ENCODE measurements at regions of chr7 and their contacts with region 1.

Region 1: DNA sequence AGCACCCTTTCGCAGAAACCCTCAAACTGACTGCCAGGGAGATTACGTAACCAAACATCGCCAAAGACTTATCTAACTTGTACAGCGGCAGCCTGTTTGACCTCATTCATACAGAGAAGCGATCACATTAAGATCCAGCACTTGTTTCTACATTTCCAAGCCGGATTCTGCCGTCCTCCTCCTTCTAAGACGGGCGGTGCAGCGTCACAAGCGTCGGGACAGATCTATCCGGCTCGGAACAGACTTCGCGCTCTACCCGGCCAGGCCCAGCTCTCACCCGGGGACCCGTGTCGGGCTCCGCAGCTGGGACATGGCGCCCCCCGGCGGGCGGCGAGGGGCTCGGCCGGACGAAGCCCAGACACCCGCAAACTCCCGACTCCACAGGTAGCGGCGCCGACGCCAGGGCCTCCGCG is 373 bp downstream of the H2AZ2 start:
- DNase-seq: peak; percentile 83 to 94
- ATAC-seq: peak; percentile 80 to 89
- H3K4me3 ChIP-seq: peak overlapping the region; percentile 61
- H3K27ac ChIP-seq: peak overlapping the region; percentile 87 to 97
- H3K4me1 ChIP-seq: peaks cover 15% of the 10 kb centered on the region
- CTCF ChIP-seq: peak; percentile 91
- EP300 ChIP-seq: no peak
- POLR2A ChIP-seq: no peak
- RAD21 ChIP-seq: peak; percentile 64 to 89; a peak in 4 of 5 replicates

Region 2: GRCh38 chr7:44581879-44582603 is 265.5 kb before region 1 on chr7 and contains the start of gene TMED4:
- CTCF ChIA-PET with region 1: interaction called, 29 read pairs
- POLR2A ChIA-PET with region 1: interaction called, 14 read pairs
- DNase-seq: peak; percentile 98 to 99
- ATAC-seq: peak; percentile 94
- H3K4me3 ChIP-seq: peak within 1 kb of the TSS; percentile 94
- H3K27ac ChIP-seq: peak within 1 kb of the TSS; percentile 94 to 95
- H3K4me1 ChIP-seq: peaks cover 16% of the 10 kb centered on the region
- CTCF ChIP-seq: no peak
- EP300 ChIP-seq: no peak
- POLR2A ChIP-seq: peak; percentile 93
- RAD21 ChIP-seq: no peak
- polyA plus RNA-seq, gene TMED4: 68.3 and 79.2 TPM in 2 replicates

Region 3: GRCh38 chr7:44606450-44607254 is 240.9 kb before region 1 on chr7 and contains the start of gene OGDH:
- CTCF ChIA-PET with region 1: interaction called, 12 read pairs
- POLR2A ChIA-PET with region 1: interaction called, 16 read pairs
- DNase-seq: peak; percentile 98
- ATAC-seq: peak; percentile 99
- H3K4me3 ChIP-seq: peak within 1 kb of the TSS; percentile 86
- H3K27ac ChIP-seq: peak within 1 kb of the TSS; percentile 88 to 94
- H3K4me1 ChIP-seq: peaks cover 26% of the 10 kb centered on the region
- CTCF ChIP-seq: no peak
- EP300 ChIP-seq: no peak
- POLR2A ChIP-seq: peak; percentile 78
- RAD21 ChIP-seq: no peak
- polyA plus RNA-seq, gene OGDH: 32.5 and 37.2 TPM in 2 replicates

Region 4: DNA sequence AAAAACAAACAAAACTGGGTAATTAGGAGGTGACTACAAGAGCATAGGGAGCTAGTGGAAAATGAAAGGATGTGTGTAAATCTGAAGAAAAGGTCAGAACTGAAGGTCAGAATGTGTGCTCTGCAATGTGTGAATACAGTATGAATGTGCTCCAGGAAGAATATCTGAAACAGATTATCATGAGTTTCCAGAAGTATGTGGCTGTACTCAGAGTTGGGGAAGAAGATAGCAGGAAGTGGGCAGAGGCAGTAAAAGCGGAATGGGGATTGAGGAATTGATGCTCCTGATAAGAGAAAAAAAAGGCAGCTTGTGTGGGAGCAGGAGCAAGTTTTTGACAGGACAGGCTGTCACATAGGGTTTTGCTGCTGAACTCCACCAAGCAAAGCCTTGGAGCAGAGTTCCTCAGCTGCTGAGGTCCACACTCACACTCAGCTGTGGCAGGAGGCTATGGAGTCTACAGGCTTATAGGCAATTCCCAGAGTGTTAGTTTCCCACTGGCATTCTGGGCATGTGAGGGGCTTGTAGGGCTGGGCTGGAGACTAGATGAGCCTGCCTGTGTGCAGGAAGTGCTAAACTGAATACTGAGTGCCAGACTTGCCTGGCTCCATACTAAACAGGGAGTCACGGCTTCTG is 22.5 kb before region 1 on chr7:
- CTCF ChIA-PET with region 1: interaction called, 14 read pairs
- POLR2A ChIA-PET with region 1: interaction called, 7 read pairs
- DNase-seq: no peak
- ATAC-seq: no peak; a peak in 2 of 6 replicates
- H3K4me3 ChIP-seq: no peak overlapping the region
- H3K27ac ChIP-seq: no peak overlapping the region
- H3K4me1 ChIP-seq: no peaks in the 10 kb centered on the region
- CTCF ChIP-seq: no peak
- EP300 ChIP-seq: no peak
- POLR2A ChIP-seq: no peak
- RAD21 ChIP-seq: no peak

Region 5: DNA sequence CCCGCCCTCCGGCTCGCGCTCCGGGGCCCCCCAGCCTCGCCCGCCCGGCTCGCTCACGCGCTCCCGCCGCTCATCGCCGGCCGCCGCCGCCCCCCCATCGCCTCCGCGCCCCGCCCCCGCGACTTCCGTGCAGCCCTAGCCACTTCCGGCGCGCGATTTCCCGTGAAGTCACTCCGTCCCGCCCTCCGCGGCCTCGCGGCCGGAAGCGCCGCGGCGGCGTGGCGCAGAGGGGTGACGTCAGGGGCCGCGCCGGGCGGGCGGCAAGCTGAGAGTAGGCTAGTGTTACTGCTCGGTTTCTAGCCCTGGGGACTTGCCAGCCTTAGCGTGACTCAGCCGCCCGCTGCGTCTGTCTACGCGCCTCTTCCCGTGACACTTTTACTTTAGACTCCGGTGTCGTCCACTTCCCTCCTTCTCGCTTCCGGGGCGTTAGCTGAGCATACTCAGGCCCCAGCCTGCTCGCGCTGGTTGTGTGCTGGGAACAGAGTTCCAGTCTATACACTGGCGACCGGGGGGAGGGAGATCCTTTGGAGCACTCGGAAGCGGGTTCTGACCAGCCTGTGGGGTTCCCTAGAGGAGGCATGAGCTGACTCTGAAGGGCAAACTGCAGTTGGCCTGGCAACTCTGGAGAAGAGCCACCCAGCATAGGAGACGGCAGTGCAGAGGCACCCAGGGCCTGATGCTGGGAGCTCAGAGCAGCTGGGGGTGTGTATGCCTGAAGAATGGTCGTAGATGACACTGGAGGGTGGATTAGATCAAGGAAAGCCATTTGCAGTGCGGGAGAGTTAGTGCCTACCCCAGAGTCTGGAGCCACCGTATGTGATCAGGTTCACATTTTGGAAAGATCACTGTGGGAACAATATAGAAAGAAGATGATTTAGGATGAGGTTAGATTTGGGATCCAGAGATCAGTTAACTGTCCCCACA is 38.1 kb after region 1 on chr7 and contains the start of gene PURB:
- CTCF ChIA-PET with region 1: interaction called, 5 read pairs
- POLR2A ChIA-PET with region 1: interaction called, 12 read pairs
- DNase-seq: peak; percentile 90 to 94
- ATAC-seq: peak; percentile 92 to 95
- H3K4me3 ChIP-seq: peak within 1 kb of the TSS; percentile 96
- H3K27ac ChIP-seq: peak within 1 kb of the TSS; percentile 91 to 96
- H3K4me1 ChIP-seq: peaks cover 40% of the 10 kb centered on the region
- CTCF ChIP-seq: no peak
- EP300 ChIP-seq: no peak
- POLR2A ChIP-seq: peak; percentile 70
- RAD21 ChIP-seq: no peak
- polyA plus RNA-seq, gene PURB: 5.7 and 6.4 TPM in 2 replicates

Measured in A549 (cell line).